GM13976 (cell line): ENCODE measurements at regions of chr14 and their contacts with region 1.

Region 1: GRCh38 chr14:69726761-69727511 is 40.0 kb upstream of the SRSF5 start:
- DNase-seq: peak; percentile 89
- CTCF ChIP-seq: peak; percentile 95

Region 2: DNA sequence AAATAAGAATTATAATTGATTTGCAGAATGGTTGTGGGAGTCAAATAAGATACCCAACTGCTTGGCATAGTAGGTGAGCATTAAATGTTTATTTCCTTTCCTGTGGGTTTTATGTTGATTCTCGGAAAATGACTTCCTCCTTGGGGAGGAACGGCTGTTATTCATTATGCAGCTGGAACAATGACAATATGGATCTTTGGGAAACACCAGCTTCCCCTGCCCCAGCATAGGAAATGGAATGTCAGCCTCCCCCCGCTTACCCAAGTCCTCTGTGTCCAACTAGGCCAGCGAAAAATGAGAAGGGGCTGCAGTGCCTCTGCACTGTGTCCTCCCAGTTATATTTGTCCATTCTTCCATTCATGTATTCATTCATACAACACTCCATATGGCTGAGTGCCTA is 140.5 kb before region 1 on chr14:
- in situ Hi-C with region 1: loop called (anchors 5 kb)
- DNase-seq: no peak
- CTCF ChIP-seq: no peak